ENCODE measurements at regions of chr11 and their contacts with region 1.

Region 1: DNA sequence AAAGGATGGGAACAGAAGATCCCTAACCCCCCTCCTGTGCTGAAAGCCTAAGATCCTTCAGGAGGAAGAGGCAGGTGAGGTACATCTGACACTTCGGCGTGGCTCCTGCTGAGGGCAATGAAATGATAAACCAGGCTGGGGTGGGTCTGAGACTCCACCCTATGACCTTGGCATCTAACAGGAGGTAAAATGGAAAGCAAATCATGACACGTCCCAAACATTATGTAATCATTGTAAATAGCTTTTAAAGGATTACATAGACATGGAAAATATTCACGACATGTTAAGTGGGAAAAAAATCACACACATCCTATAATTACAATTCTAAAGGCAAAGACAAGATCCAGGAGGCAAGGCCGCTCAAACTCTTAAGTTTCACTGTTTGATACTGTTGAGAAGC is 70.5 kb downstream of the LINC01488 start:
- DNase-seq: no peak
- ATAC-seq: no peak
- H3K4me3 ChIP-seq: no peak overlapping the region
- H3K27ac ChIP-seq: no peak overlapping the region
- H3K4me1 ChIP-seq: no peaks in the 10 kb centered on the region
- H3K27me3 ChIP-seq: no peaks in the 10 kb centered on the region
- CTCF ChIP-seq: no peak

Region 2: GRCh38 chr11:69027704-69028372 is 524.1 kb before region 1 on chr11:
- CTCF ChIA-PET with region 1: no interaction called
- POLR2A ChIA-PET with region 1: no interaction called
- in situ Hi-C with region 1: no loop called
- intact Hi-C with region 1: no loop called
- DNase-seq: no peak
- ATAC-seq: no peak
- H3K4me3 ChIP-seq: no peak overlapping the region
- H3K27ac ChIP-seq: no peak overlapping the region
- H3K4me1 ChIP-seq: no peaks in the 10 kb centered on the region
- H3K27me3 ChIP-seq: peaks cover 2% of the 10 kb centered on the region; the same call in 1 of the 2 replicates
- CTCF ChIP-seq: no peak

Region 3: DNA sequence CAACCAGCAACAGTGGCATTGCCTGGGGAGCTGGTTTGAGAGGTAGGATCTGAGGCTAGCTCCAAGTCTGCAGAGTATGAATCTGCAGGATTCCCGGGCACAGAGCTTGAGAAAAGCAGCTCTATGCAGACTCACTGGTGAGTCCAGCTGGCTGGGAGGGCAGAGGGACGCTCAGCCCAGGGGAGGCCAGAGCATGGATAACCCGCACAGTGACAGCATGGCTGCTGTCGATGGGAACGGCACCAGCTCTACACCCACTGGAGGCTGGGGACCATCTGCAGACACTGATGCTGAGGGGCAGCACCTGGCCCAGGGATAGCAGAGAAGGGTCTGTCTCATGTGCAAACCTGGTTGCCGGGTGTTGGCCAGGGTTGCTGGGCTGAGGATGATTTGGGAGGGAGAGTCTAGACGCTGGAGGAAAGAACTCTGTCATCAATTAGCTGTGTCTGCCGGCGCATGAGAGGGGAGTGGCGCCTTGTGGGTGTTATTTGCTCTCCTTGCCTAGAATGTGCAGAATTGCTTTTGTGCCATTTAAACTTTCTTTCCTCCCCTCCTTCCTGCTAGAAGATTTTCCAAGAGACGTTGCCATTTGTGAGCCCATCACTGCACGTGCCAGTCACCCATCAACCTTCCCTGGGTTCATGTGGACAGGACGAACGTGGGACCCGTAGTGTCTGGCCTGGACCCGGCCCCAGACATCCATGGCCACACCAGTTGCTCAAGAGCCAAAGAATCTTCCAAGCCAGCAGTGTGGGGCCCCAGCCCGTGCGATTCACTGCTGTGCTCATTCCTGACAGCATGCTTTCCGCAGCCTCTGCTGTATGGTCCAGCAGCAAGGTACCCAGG is 89.6 kb before region 1 on chr11:
- CTCF ChIA-PET with region 1: no interaction called
- POLR2A ChIA-PET with region 1: interaction called, 11 read pairs
- in situ Hi-C with region 1: no loop called
- intact Hi-C with region 1: no loop called
- DNase-seq: no peak
- ATAC-seq: no peak
- H3K4me3 ChIP-seq: no peak overlapping the region
- H3K27ac ChIP-seq: no peak overlapping the region
- H3K4me1 ChIP-seq: no peaks in the 10 kb centered on the region; the same call in 1 of the 2 replicates
- H3K27me3 ChIP-seq: no peaks in the 10 kb centered on the region
- CTCF ChIP-seq: no peak

Region 4: GRCh38 chr11:69662017-69662698 is 110.2 kb after region 1 on chr11:
- CTCF ChIA-PET with region 1: no interaction called
- POLR2A ChIA-PET with region 1: no interaction called
- in situ Hi-C with region 1: no loop called
- intact Hi-C with region 1: no loop called
- DNase-seq: no peak
- ATAC-seq: peak; percentile 63; the same call in 1 of the 2 replicates
- H3K4me3 ChIP-seq: no peak overlapping the region
- H3K27ac ChIP-seq: no peak overlapping the region
- H3K4me1 ChIP-seq: no peaks in the 10 kb centered on the region; the same call in 1 of the 2 replicates
- H3K27me3 ChIP-seq: no peaks in the 10 kb centered on the region
- CTCF ChIP-seq: no peak

Measured in Panc1 (cell line).